Activated naive CD4-positive, alpha-beta T cell treated with anti-CD3 and anti-CD28 coated beads for 36 hours (primary cell): ENCODE measurements at regions of chr7 and their contacts with region 1.

Region 1: DNA sequence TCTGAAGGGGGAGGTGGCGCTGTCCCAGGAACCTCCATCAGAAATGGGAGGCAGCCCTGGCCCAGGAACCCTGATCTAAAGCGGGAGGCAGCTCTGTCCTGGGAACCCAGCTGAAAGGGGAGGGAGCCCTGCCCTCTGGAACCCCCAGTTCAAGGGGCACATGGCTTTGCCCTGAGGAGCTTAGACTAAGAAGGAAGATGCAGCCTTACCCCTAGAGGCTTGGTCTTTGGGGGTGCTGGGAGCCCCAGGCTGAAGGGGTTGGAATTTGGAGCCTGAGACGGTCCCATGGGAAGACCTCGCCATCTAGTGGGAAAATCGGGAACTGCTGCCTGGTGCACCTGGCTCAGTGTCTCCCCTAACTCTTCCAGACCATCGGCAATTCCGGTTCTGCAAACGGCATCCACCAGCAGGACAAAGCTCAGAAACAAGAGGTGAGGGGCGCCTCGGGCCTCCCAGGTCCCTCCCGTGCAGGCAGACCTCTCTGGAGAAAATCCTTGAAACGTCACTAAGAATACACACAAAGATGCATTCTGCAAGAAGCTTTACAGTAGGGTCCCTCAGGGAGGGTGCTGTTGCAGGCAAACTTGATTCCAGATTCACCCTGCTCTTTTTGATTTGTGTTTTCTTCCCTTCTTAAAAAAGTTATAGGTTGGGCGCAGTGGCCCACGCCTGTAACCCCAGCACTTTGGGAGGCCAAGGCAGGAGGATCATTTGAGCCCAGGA is 52.4 kb upstream of the GTF2IRD1 start:
- DNase-seq: peak; percentile 81
- H3K4me3 Mint-ChIP-seq: no peak overlapping the region
- H3K27ac Mint-ChIP-seq: no peak overlapping the region
- H3K4me1 Mint-ChIP-seq: no peaks in the 10 kb centered on the region
- H3K27me3 Mint-ChIP-seq: no peaks in the 10 kb centered on the region

Region 2: DNA sequence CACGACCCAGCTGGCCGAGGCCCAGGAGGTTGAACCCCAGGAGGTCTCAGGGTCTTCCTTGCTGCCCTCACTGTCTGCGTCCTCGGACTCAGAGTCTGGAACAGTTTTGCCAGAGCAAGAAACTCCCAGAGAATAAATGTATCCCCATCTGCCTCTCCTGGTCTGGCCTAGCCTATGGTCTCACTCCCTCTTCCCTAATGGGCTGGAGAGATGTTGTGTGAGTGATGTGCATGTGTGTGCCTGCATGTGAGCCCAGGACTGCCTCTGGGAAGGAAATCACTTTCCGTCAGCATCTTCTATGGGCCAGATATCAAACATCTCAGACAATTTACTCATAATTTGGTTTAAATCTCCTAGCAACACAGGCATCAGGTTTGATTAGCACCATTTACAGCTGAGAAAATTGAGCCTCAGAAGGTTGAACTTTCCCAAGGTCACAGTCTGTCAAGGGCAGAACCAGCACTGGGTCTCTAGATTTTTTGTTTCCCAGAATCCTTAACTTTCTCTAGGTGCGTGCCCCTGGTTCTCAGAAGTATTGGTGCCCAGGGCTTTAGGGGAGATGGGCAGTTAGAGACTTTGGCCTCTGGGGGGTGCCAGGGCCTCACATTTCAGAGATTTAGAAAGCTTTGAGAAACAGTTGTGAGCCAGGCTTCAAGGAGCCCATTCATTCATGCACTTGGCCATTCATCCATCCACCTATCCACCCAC is 535.4 kb before region 1 on chr7:
- CTCF ChIA-PET with region 1: no interaction called
- intact Hi-C with region 1: loop called (anchors 10 kb)
- DNase-seq: peak; percentile 31
- H3K4me3 Mint-ChIP-seq: no peak overlapping the region
- H3K27ac Mint-ChIP-seq: no peak overlapping the region
- H3K4me1 Mint-ChIP-seq: no peaks in the 10 kb centered on the region
- H3K27me3 Mint-ChIP-seq: no peaks in the 10 kb centered on the region

Region 3: DNA sequence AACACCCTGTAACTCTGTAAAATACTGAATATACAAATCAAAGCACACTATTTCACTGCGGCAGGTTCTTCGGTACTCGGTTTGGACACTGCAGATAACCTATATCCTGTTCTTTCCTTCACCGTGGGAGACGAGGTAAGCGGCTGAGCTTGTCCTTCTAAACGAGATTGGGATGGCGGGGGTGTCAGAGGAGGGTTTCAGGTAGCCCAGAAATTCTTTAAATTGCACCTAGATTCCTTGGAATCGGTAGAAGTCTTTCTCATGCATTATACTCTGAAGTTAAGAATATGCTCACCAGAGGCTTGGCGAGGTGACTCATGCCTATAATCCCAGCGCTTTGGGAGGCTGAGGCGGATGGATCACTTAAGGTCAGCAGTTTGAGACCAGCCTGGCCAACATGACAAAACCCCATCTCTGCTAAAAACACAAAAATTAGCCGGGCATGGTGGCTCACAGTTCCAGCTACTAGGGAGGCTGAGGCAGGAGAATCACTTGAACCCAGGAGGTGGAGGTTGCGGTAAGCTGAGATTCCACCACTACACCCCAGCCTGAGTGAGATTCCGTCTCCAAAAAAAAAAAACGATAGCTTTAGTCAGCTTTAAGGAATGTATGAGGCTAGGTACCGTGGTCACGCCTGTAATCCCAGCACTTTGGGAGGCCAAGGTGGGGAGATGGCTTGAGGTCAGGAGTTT is 201.6 kb before region 1 on chr7:
- CTCF ChIA-PET with region 1: interaction called, 151 read pairs
- intact Hi-C with region 1: no loop called
- DNase-seq: no peak
- H3K4me3 Mint-ChIP-seq: no peak overlapping the region
- H3K27ac Mint-ChIP-seq: no peak overlapping the region
- H3K4me1 Mint-ChIP-seq: peaks cover 13% of the 10 kb centered on the region
- H3K27me3 Mint-ChIP-seq: no peaks in the 10 kb centered on the region

Region 4: GRCh38 chr7:74275401-74275881 is 125.9 kb before region 1 on chr7:
- CTCF ChIA-PET with region 1: interaction called, 4 read pairs
- intact Hi-C with region 1: loop called (anchors 1 kb)
- DNase-seq: no peak
- H3K4me3 Mint-ChIP-seq: no peak overlapping the region
- H3K27ac Mint-ChIP-seq: no peak overlapping the region
- H3K4me1 Mint-ChIP-seq: peaks cover 13% of the 10 kb centered on the region
- H3K27me3 Mint-ChIP-seq: peaks cover 3% of the 10 kb centered on the region

Region 5: GRCh38 chr7:74379938-74380337 is 21.4 kb before region 1 on chr7:
- CTCF ChIA-PET with region 1: interaction called, 12 read pairs
- intact Hi-C with region 1: no loop called
- DNase-seq: no peak
- H3K4me3 Mint-ChIP-seq: no peak overlapping the region
- H3K27ac Mint-ChIP-seq: no peak overlapping the region
- H3K4me1 Mint-ChIP-seq: no peaks in the 10 kb centered on the region
- H3K27me3 Mint-ChIP-seq: no peaks in the 10 kb centered on the region

Region 6: GRCh38 chr7:74417419-74417971 is 16.2 kb after region 1 on chr7:
- CTCF ChIA-PET with region 1: interaction called, 12 read pairs
- intact Hi-C with region 1: no loop called
- DNase-seq: peak; percentile 60
- H3K4me3 Mint-ChIP-seq: no peak overlapping the region
- H3K27ac Mint-ChIP-seq: no peak overlapping the region
- H3K4me1 Mint-ChIP-seq: no peaks in the 10 kb centered on the region
- H3K27me3 Mint-ChIP-seq: no peaks in the 10 kb centered on the region